Activated CD8-positive, alpha-beta T cell treated with anti-CD3 and anti-CD28 coated beads for 36 hours (primary cell): ENCODE measurements at regions of chr17 and their contacts with region 1.

Region 1: DNA sequence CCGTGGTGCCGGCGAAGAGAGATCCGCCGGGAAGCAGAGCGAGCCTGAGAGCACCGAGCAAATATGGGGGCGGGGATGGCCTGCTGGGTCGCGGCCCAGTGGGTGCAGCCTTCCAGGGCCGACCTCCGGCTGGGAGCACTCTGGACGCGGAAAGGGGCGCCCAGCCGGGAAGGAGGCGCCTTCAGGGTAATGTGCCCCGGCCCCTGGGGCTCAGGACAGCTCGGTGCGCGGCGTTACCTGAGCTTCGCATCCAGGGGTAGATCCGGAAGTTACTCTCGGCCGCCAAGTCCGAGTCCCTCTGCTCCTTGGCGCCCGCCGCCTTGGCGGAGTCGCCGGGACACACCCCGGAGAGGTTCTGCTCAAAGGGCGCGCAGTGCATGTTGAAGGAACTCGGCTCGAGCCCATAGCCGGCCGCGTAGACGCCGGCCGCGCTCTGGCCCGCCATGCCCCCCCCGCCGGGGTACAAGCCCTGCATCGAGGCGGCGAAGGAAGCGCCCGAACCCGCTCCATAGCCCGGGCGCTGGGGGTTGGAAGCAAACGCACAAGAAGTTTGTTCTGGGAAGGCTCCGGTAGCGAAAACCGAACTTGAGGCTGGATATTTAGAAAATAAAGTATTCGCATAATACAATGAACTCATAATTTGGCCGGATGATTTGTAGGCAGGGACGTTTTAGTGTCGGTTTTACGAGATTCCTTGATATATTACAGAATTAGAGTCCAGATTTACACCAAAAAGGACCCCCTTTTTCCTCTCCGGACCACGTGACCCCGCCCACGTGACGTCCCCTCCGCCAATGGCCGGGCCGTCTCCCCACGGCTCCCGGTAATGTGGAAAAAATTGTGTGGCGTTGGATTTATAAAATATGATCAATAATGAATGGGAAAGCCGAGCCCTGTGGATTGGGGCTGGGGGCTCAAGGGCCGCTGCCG is at the start of gene HOXB7:
- DNase-seq: peak; percentile 81
- ATAC-seq: peak; percentile 29
- H3K4me3 Mint-ChIP-seq: peak within 1 kb of the TSS; percentile 88
- H3K27ac Mint-ChIP-seq: peak within 1 kb of the TSS; percentile 63
- H3K4me1 Mint-ChIP-seq: peaks cover 30% of the 10 kb centered on the region
- H3K27me3 Mint-ChIP-seq: peaks cover 73% of the 10 kb centered on the region
- CTCF ChIP-seq: no peak
- total RNA-seq, gene HOXB7: 0.50 to 1.0 TPM

Region 2: GRCh38 chr17:48543107-48543853 is 67.3 kb before region 1 on chr17:
- CTCF ChIA-PET with region 1: no interaction called
- POLR2A ChIA-PET with region 1: no interaction called
- intact Hi-C with region 1: no loop called
- DNase-seq: peak; percentile 76
- ATAC-seq: peak; percentile 63
- H3K4me3 Mint-ChIP-seq: peak overlapping the region; percentile 85
- H3K27ac Mint-ChIP-seq: peak overlapping the region; percentile 97
- H3K4me1 Mint-ChIP-seq: peaks cover 33% of the 10 kb centered on the region
- H3K27me3 Mint-ChIP-seq: peaks cover 1% of the 10 kb centered on the region
- CTCF ChIP-seq: peak; percentile 45

Region 3: GRCh38 chr17:48625495-48626244 is 15.1 kb after region 1 on chr17:
- CTCF ChIA-PET with region 1: interaction called, 40 read pairs
- POLR2A ChIA-PET with region 1: interaction called, 19 read pairs
- intact Hi-C with region 1: no loop called
- DNase-seq: peak; percentile 55
- ATAC-seq: peak; percentile 58
- H3K4me3 Mint-ChIP-seq: peak overlapping the region; percentile 77
- H3K27ac Mint-ChIP-seq: peak overlapping the region; percentile 52
- H3K4me1 Mint-ChIP-seq: peaks cover 8% of the 10 kb centered on the region
- H3K27me3 Mint-ChIP-seq: peaks cover 77% of the 10 kb centered on the region
- CTCF ChIP-seq: no peak